ENCODE measurements at regions of chr3 and their contacts with region 1.

Region 1: DNA sequence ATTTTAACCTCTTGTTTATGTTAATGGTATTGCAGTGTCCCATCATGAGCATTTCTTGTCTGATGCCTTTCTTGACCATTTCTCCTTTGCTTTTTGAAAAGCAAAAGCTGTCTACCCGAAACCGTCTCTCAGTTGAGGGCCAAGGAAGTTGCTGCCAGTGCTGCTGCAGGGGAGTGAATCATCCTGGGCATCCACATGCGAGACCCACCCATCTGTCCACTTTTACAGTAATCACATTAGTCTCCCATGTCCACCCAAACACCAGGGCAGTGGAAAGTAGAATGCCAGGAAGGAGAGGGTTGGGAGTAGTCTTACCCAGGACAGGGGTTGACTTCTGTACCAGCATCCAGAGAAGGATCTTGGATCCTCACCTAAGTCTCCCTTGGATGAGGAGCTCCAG is 48.6 kb upstream of the TEX264 start:
- DNase-seq: no peak
- H3K4me3 Mint-ChIP-seq: no peak overlapping the region
- H3K27ac Mint-ChIP-seq: no peak overlapping the region
- H3K4me1 Mint-ChIP-seq: peaks cover 11% of the 10 kb centered on the region
- H3K27me3 Mint-ChIP-seq: no peaks in the 10 kb centered on the region
- CTCF ChIP-seq: no peak

Region 2: DNA sequence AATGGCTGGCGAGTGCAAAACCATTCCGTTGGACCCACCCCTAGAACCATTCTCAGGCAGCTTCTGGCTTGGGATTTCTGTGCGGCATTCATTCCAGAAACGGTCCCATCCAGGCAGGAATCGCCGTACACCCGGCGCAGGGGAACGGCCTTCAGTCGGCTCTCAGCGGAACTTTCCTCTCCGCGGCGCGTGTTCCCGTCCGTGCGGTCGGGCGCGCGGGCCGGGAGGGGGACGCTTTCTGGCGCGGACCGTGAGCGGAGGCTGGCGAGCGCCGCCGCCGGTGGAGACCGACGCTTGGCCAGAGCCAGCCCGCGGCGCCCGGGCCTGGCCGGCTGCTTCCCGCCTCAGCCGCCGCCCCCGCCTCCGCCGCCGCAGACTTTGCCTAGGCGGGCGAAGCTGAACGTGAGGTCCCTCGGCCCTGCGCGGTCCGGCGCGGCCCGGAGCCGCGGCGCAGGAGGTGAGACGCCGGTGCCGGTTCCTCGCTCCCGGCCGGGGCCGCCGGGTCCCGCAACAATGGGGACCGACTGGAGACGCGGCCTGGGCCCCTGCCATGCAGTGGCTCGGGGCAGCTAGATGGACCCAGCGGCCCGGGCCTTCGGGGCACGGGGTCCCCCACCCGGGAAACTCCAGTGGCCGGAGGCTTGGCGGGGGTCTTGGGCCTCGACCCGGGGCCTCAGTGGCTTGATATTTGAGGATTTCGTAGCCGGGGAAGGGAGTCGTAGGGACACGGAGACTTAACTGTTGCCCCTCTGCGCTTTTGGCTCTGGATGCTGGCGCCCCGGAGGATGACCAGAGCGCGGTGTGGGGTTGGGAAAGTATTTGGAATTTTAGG is 83.7 kb before region 1 on chr3 and contains the start of gene RAD54L2:
- CTCF ChIA-PET with region 1: interaction called, 10 read pairs
- intact Hi-C with region 1: no loop called
- DNase-seq: peak; percentile 90
- H3K4me3 Mint-ChIP-seq: peak within 1 kb of the TSS; percentile 79
- H3K27ac Mint-ChIP-seq: peak within 1 kb of the TSS; percentile 54
- H3K4me1 Mint-ChIP-seq: peaks cover 16% of the 10 kb centered on the region
- H3K27me3 Mint-ChIP-seq: peaks cover 7% of the 10 kb centered on the region
- CTCF ChIP-seq: no peak
- total RNA-seq, gene RAD54L2: 22.9 and 23.6 TPM in 2 replicates

Region 3: GRCh38 chr3:51657234-51657633 is 34.8 kb after region 1 on chr3:
- CTCF ChIA-PET with region 1: no interaction called
- intact Hi-C with region 1: no loop called
- DNase-seq: no peak
- H3K4me3 Mint-ChIP-seq: no peak overlapping the region
- H3K27ac Mint-ChIP-seq: no peak overlapping the region
- H3K4me1 Mint-ChIP-seq: no peaks in the 10 kb centered on the region
- H3K27me3 Mint-ChIP-seq: no peaks in the 10 kb centered on the region
- CTCF ChIP-seq: no peak